Cardiac septum (tissue), 1 donor: ENCODE measurements at regions of chr5 and their contacts with region 1.

Region 1: GRCh38 chr5:149497357-149497756 is 53.9 kb downstream of the CSNK1A1 start:
- DNase-seq: no peak

Region 2: GRCh38 chr5:149177911-149178565 is 319.3 kb before region 1 on chr5:
- intact Hi-C with region 1: no loop called
- DNase-seq: no peak

Region 3: DNA sequence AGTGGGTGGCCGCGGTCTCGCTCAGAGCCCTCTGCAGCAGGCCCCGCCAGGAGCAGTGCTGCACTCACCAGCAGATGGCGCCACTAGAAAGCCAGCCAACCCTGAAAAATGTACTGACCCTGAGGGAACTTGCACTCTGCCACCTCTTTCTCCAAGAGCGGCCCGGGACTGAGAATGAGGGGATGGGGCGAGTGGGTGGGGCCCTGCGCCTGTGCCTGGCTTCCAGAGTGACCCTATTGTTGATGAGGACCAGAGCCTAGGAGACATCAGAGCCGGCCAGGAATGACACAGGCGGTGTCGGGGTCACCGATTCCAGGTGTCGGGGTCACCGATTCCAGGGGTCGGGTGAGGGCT is 115.4 kb before region 1 on chr5:
- intact Hi-C with region 1: no loop called
- DNase-seq: peak; percentile 90

Region 4: DNA sequence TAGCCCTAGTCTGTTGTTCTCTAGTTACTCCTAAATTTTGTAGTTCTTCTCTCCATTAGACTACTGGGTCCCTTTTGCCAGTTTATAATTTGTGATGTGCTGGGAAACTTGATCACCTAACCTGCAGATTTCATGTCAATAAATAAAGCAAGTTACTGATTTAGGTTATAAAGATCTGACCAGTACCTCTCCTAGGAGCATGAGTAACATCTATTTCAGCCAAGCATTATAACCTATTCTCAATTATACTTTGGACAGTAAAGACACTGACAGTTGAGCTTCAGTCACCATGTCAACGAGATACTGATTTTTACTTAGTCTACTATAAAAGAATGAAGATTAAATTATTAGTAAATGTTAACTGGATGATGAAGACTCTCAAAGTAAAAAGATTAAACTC is 17.2 kb after region 1 on chr5:
- intact Hi-C with region 1: no loop called
- DNase-seq: no peak

Region 5: DNA sequence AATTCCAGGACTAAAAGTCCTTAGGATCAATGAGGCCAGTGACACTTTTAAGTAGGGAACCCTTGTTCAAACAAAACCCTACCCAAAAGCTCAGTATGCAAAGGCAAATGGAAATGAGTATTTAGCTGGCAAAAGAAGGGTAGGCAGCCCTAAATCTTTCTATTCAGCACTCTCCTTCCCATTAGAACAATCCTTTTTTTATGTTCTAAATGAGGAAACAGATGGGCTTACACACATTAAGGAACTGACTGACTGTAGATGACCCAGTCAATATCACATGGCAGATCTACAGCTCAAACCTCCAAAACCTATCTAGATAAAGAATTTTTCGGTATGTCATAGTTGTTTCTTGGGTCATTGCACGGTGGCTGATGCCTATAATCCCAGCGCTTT is 46.7 kb after region 1 on chr5:
- intact Hi-C with region 1: loop called (anchors 5 kb)
- DNase-seq: no peak